ENCODE measurements at regions of chr3 and their contacts with region 1.

Region 1: GRCh38 chr3:127667119-127667681 is 5.6 kb upstream of the ABTB1 start:
- DNase-seq: no peak
- ATAC-seq: no peak

Region 2: GRCh38 chr3:127389420-127389819 is 277.8 kb before region 1 on chr3:
- intact Hi-C with region 1: no loop called
- DNase-seq: no peak
- ATAC-seq: no peak

Region 3: DNA sequence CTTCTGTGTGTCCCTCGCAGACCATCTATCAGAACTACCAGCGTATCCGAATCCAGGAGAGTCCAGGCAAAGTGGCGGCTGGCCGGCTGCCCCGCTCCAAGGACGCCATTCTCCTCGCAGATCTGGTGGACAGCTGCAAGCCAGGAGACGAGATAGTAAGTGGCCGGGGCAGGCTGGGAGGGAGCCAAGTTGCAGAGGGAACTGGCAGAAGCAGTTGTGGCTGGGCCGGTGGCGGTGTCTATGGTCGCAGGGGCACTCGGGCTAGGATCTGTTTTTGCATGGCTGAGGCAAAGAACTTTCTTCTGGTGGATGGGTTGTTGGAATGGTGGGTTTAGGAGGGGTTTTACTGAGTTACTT is 58.9 kb before region 1 on chr3:
- intact Hi-C with region 1: loop called in 1 of 2 experiments (anchors 10 kb)
- DNase-seq: peak; percentile 65
- ATAC-seq: peak; percentile 67 to 80

Region 4: GRCh38 chr3:127710155-127710941 is 43.1 kb after region 1 on chr3:
- intact Hi-C with region 1: no loop called
- DNase-seq: no peak
- ATAC-seq: peak; percentile 22 to 68

Measured in left cardiac atrium (tissue), 4 donors.